Dorsolateral prefrontal cortex (tissue), 120 donors: ENCODE measurements at regions of chr2 and their contacts with region 1.

Region 1: DNA sequence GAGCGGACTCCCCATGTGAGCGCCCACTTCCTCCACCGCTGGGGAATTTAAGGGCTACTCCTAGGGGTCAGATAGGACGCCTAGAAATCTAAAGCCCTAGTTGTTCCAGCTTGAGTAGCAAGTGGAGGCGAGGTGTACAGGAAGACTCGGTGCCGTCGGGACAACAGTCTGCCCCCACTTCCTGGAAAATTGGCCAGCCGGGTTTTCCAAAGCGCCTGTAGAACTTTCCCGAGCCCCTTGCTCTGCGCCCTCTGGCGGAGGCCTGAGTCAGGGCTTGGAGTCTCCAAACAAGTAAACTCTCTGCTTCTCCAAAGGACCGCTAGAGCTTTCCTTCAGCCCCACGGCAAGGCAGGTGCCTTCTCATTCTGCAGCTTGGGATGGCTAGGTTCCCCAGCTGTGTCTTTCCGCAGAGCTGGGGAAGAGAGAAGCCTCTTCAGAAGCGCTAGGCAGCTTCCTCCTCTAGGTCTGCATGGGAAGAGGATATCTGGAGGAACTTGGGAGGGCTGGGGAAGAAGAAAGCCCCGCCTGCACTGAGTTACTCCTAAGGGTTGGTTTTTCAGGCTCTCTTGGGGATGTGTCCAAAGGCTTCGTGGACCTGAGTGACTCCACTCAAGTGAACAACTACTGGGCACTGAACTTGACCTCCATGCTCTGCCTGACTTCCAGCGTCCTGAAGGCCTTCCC is 688 bp downstream of the SPR start:
- DNase-seq: peak; percentile 79 to 92 (median 87)
- H3K4me3 ChIP-seq: peak overlapping the region; percentile 54 to 82 (median 70)
- H3K27ac ChIP-seq: peak overlapping the region in 58 of 59 donors; percentile 36 to 97 (median 82)
- H3K27me3 ChIP-seq: no peaks in the 10 kb centered on the region
- CTCF ChIP-seq: peak; percentile 54 to 95 (median 88)

Region 2: GRCh38 chr2:72731116-72731515 is 156.8 kb before region 1 on chr2:
- intact Hi-C with region 1: no loop called
- DNase-seq: no peak
- H3K4me3 ChIP-seq: no peak overlapping the region
- H3K27ac ChIP-seq: peak overlapping the region in 1 of 59 donors; percentile 1
- H3K27me3 ChIP-seq: no peaks in the 10 kb centered on the region
- CTCF ChIP-seq: no peak

Region 3: GRCh38 chr2:72825241-72826155 is 62.4 kb before region 1 on chr2 and contains the start of gene EXOC6B:
- intact Hi-C with region 1: loop called in 1 of 2 experiments (anchors 10 kb)
- DNase-seq: peak; percentile 90 to 97 (median 96)
- H3K4me3 ChIP-seq: peak within 1 kb of the TSS; percentile 67 to 99 (median 93)
- H3K27ac ChIP-seq: peak within 1 kb of the TSS in 58 of 59 donors; percentile 35 to 93 (median 83)
- H3K27me3 ChIP-seq: no peaks in the 10 kb centered on the region
- CTCF ChIP-seq: peak in 51 of 56 donors; percentile 11 to 73 (median 48)
- total RNA-seq, gene EXOC6B: 102 to 181 (median 132) TPM

Region 4: GRCh38 chr2:72973566-72974435 is 85.9 kb after region 1 on chr2:
- intact Hi-C with region 1: loop called (anchors 2 to 5 kb)
- DNase-seq: peak in 2 of 10 donors; percentile 26 to 59
- H3K4me3 ChIP-seq: no peak overlapping the region
- H3K27ac ChIP-seq: peak overlapping the region in 7 of 59 donors; percentile 5 to 36 (median 22)
- H3K27me3 ChIP-seq: no peaks in the 10 kb centered on the region
- CTCF ChIP-seq: peak in 55 of 56 donors; percentile 41 to 76 (median 66)

Region 5: DNA sequence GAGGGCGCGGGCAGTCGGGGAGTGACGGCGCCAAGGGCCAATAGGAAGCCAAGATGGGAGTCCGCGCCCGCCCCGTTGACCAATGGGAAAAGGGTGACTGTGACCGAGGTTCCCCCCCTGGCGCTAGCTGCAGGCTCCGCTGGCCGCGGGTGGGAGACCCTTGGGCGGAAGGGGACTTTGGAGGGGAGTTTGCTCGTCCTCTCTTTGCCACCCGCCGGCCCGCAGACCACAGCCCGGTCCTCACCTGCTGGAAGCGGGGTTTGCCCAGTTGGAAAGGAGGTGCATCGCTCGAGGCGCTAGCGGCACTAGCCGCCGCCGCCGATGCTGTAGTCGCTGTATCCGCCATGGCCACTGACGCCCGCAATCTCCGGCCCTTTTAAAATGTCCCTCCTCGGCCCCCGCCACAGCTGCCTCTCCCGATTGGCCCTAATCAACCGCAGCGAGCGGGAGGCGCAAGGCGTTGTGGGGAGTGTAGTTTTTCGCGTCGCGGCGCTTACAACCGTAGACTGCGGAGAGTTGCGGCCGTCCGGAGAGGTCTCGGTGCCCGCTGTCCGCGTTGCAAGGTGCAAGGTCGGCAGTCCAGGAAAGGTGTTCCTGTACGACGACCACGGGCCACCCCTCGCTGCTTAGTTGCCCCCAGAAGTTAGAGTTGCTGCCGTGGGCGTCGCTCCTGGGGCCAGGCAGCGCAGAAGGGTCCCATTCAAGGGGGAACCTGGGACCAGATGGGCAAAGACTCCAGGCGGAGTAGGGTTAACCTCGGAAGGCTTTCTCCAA is 183.7 kb after region 1 on chr2 and contains the start of gene SFXN5:
- intact Hi-C with region 1: loop called in 1 of 2 experiments (anchors 5 kb)
- DNase-seq: peak; percentile 95 to 99 (median 98)
- H3K4me3 ChIP-seq: peak within 1 kb of the TSS; percentile 69 to 100 (median 93)
- H3K27ac ChIP-seq: peak within 1 kb of the TSS; percentile 72 to 99 (median 97)
- H3K27me3 ChIP-seq: no peaks in the 10 kb centered on the region
- CTCF ChIP-seq: peak in 34 of 56 donors; percentile 6 to 61 (median 33)
- total RNA-seq, gene SFXN5: 82.7 to 370 (median 148) TPM

Region 6: DNA sequence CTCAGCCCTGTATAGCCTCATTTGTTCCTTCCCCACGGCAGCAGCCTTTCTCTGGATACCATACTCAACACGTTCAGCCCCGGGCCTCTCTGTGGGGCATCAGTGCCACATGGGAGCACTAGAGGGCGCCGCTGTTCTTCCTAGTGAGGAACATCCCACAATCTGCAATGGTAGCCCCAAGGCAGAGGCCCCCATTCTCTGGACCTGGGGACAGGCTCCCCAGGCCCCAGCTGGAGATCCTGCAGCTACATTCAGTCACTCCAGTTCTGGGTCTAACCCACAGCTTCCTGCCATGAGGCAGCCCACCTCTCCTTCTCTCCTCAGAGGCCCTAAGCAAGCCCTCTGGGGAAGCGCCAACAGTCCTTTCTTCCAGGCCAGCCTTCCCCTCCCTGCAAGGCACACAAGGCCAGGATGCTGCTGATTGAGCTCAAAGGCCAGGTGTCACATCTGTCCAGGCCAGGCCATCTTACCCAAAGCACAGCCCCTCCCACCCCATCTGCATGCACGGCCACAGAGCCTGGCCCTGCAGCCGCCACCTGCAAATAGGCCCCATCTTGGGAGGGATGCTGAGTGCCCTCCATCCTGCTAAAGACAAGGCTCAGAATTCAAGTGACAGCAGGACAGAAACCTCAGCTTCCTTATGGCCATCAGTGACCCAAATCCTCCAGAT is 197.9 kb after region 1 on chr2:
- intact Hi-C with region 1: loop called in 1 of 2 experiments (anchors 10 kb)
- DNase-seq: peak; percentile 82 to 94 (median 86)
- H3K4me3 ChIP-seq: no peak overlapping the region
- H3K27ac ChIP-seq: peak overlapping the region in 1 of 59 donors; percentile 43
- H3K27me3 ChIP-seq: no peaks in the 10 kb centered on the region
- CTCF ChIP-seq: peak in 55 of 56 donors; percentile 47 to 97 (median 90)

Region 7: GRCh38 chr2:73117441-73117840 is 229.5 kb after region 1 on chr2:
- intact Hi-C with region 1: no loop called
- DNase-seq: no peak
- H3K4me3 ChIP-seq: no peak overlapping the region
- H3K27ac ChIP-seq: no peak overlapping the region
- H3K27me3 ChIP-seq: no peaks in the 10 kb centered on the region
- CTCF ChIP-seq: no peak

Region 8: DNA sequence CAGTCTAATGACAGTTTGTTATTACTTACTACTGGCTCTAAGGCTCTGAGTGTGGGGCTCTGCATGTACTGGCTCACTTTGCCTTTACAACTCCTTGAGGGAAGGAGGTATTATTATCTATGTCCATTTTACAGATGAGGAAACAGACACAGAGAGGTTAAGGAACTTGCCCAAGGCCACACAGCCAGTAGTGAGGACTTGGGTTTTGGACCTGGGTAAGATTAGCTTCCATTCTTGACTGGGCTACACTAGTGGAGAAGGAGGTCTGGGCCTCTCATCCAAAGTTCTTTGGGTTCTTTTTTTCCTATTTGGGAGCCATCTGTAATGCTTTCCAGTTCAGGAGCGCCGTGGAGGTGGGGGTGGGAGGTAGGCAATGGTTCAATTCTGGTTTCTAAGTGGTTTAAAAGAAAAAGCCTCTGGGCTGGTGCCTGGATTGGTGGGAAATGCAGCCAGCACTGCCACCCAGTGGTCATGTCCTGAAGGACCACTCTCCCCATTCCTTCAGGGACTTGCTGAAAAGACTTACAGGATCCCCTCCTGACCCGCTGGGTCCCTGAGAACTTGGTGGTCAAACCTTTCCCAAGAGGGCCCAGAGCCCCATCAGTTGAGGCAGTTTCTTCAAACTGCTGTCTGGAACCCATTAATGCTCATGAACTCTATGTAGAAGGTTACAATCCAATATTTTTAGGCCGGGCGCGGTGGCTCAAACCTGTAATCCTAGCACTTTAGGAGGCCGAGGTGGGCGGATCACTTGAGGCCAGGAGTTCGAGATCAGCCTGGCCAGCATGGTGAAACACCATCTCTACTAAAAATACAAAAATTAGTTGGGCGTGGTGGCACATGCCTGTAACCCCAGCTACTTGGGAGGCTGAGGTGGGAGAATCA is 275.8 kb after region 1 on chr2:
- intact Hi-C with region 1: loop called (anchors 5 kb)
- DNase-seq: peak; percentile 59 to 83 (median 74)
- H3K4me3 ChIP-seq: no peak overlapping the region
- H3K27ac ChIP-seq: no peak overlapping the region
- H3K27me3 ChIP-seq: no peaks in the 10 kb centered on the region
- CTCF ChIP-seq: peak; percentile 76 to 95 (median 89)

Region 9: DNA sequence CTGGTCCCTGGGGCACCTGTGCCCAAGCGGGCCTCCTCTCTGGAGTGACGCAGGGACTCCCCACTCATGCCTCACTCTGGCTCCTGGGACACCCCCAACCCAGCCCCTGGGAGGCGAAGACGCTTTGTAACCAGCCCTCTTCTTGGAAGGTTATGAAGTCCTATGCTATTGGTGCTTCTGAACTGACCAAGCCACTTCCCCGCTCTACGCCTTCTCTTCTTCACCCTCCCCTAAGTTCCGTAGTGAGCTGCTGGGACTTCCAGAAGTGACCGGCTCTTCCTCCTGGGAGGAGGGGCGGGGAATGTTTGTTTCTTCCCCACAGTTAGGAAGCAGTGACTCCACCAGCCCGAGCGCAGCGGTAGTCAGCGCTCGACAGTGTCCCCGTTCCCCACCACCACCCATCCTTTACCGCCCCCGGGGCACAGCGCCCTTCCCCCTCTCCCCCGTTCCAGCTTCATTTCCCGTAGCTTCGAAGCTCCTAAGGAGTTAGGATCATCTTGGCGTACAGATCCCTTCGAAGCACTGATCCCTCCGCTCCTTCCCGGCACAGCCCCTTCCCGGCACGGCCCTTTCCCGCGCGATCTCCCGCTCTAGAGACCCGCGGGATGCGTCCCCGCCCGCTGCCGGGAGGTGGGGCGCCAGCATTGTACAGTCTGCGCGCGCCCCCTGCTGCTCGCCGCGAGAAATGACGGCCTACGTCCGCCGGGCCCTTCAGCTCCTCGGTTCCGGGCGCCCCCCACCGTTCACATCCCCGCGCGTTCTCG is 289.2 kb after region 1 on chr2:
- intact Hi-C with region 1: loop called (anchors 2 to 5 kb)
- DNase-seq: peak; percentile 82 to 92 (median 90)
- H3K4me3 ChIP-seq: peak overlapping the region; percentile 33 to 75 (median 64)
- H3K27ac ChIP-seq: peak overlapping the region in 23 of 59 donors; percentile 6 to 76 (median 52)
- H3K27me3 ChIP-seq: peaks cover 0 to 42% (median 0%) of the 10 kb centered on the region in 45 donors
- CTCF ChIP-seq: peak; percentile 85 to 100 (median 99)

Region 10: DNA sequence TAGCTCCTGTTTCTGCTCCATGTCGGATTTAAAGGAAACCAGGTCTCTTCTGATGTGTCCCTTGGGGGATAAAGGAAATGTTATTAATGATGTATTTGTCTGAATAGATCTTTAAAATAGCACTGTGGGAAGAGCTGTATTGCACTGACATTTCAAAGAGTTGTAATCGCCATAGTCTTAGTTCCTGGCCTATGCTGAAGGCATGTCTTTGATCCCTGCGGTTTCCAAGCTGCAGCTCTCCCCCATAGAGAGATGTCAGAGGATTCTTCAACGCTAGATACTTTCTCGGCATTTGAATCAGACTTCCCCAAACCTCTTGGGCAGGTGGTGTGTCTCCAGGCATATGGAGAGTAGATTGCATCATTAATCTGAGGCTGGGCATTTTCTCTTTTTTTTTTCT is 713.9 kb after region 1 on chr2:
- intact Hi-C with region 1: no loop called
- DNase-seq: no peak
- H3K4me3 ChIP-seq: no peak overlapping the region
- H3K27ac ChIP-seq: no peak overlapping the region
- H3K27me3 ChIP-seq: no peaks in the 10 kb centered on the region
- CTCF ChIP-seq: no peak